AG04449 (cell line): ENCODE measurements at regions of chr3 and their contacts with region 1.

Region 1: GRCh38 chr3:172341482-172342059 is 106.7 kb downstream of the GHSR start:
- DNase-seq: no peak
- H3K4me3 ChIP-seq: no peak overlapping the region
- CTCF ChIP-seq: peak; percentile 38

Region 2: DNA sequence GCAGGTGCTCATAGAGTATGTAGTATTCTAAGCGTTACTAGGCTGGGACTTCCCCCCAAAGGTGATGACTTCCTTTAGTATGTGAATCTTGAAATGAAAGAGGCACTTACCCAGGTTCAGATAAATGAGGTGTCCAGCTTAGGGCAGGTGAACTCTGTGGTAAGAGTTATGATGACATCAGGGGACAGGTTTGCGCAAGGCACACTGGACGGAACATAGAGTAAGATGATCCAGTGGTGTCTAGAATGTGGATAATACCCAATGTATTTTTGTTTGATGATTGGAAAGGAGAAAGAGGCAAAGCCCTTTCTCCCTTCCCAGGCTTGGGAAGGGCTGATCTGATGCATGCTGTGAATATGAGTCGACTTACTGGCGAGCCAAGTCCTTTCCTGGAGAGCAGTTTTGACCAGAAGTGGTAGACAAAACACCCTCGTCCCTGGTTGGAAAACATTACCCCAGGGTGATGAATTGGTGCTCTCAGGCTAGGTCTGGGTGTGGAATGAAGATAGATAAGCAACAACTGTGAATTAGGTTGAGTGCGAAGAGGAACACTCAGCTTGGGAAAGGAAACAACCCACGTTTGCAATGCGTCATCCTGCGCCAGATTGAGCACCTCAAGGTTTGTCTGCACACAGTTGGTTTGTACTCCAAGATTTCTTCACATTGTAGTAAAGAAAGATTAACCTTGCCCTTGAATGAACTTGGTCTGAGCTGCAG is 17.5 kb before region 1 on chr3:
- CTCF ChIA-PET with region 1: interaction called, 10 read pairs
- POLR2A ChIA-PET with region 1: no interaction called
- DNase-seq: peak; percentile 44
- H3K4me3 ChIP-seq: no peak overlapping the region
- CTCF ChIP-seq: no peak

Region 3: GRCh38 chr3:172355839-172356238 is 14.3 kb after region 1 on chr3:
- CTCF ChIA-PET with region 1: interaction called, 28 read pairs
- POLR2A ChIA-PET with region 1: no interaction called
- DNase-seq: peak; percentile 76
- H3K4me3 ChIP-seq: no peak overlapping the region
- CTCF ChIP-seq: no peak